ENCODE measurements at regions of chr11 and their contacts with region 1.

Region 1: GRCh38 chr11:59534676-59535075 is 23.3 kb downstream of the OR4D9 start:
- DNase-seq: no peak
- ATAC-seq: no peak
- H3K4me3 ChIP-seq: no peak overlapping the region
- H3K27ac ChIP-seq: no peak overlapping the region
- H3K4me1 ChIP-seq: peaks cover 4% of the 10 kb centered on the region; the same call in 1 of the 2 replicates
- H3K27me3 ChIP-seq: no peaks in the 10 kb centered on the region
- CTCF ChIP-seq: no peak

Region 2: DNA sequence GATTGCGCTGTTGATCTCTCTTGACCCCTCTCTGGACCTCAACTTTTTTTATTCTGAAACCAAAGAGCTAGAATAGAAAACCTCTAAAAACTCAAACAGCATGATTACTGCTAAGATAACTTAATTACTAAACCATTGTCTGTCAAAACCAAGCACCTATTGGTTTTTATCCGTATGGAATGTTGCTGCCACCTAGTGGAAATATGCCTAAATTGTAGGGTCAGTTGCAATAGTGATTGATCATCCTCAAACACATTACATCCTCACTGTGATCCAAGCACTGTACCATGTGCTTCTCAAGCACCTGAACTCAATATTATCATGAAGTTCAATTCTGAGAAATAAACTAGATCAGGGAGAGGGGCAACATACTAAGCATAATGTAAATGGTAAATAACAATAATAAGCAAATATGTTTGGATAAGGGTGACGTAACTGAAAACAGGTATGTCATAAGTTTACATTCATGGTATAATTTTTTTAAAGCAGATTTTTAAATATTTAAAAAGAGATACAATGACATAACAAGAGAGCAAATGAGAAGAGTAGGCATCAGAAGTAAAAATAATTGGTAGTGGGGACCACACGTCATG is 104.7 kb before region 1 on chr11:
- CTCF ChIA-PET with region 1: no interaction called
- POLR2A ChIA-PET with region 1: no interaction called
- intact Hi-C with region 1: no loop called
- DNase-seq: peak; percentile 86
- ATAC-seq: peak; percentile 54; the same call in 1 of the 2 replicates
- H3K4me3 ChIP-seq: no peak overlapping the region
- H3K27ac ChIP-seq: no peak overlapping the region
- H3K4me1 ChIP-seq: no peaks in the 10 kb centered on the region
- H3K27me3 ChIP-seq: peaks cover 22% of the 10 kb centered on the region
- CTCF ChIP-seq: peak; percentile 96

Region 3: DNA sequence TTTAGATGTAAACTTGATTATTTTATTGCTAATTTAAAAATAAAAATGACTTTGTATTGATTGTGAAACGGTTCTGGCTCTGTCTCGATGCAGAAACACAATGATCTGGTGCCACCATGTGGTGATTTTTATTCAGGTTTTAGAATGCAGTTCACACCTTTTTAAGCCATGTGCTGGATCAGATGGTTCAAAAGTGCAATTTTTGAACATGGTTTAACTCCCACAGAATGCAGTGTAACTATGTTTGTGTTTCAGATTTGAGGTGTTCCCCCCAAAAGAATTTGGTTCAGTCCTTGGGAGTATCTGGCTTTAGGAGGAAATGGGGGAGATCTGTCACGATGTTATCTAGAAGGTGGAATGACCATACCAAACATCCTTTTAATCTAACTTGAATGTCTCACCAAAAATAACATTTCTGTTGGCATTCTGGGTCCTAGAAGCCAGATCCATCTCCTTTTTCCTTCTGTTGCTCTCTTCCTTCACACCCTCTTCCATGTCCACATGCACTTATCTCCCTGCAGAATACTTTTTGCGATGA is 268.0 kb after region 1 on chr11:
- CTCF ChIA-PET with region 1: interaction called, 12 read pairs
- POLR2A ChIA-PET with region 1: no interaction called
- intact Hi-C with region 1: loop called (anchors 10 kb)
- DNase-seq: peak; percentile 84
- ATAC-seq: peak; percentile 46
- H3K4me3 ChIP-seq: no peak overlapping the region
- H3K27ac ChIP-seq: no peak overlapping the region
- H3K4me1 ChIP-seq: peaks cover 25% of the 10 kb centered on the region
- H3K27me3 ChIP-seq: no peaks in the 10 kb centered on the region
- CTCF ChIP-seq: peak; percentile 89

Measured in PC-3 (cell line).